ENCODE measurements at regions of chr12 and their contacts with region 1.

Region 1: DNA sequence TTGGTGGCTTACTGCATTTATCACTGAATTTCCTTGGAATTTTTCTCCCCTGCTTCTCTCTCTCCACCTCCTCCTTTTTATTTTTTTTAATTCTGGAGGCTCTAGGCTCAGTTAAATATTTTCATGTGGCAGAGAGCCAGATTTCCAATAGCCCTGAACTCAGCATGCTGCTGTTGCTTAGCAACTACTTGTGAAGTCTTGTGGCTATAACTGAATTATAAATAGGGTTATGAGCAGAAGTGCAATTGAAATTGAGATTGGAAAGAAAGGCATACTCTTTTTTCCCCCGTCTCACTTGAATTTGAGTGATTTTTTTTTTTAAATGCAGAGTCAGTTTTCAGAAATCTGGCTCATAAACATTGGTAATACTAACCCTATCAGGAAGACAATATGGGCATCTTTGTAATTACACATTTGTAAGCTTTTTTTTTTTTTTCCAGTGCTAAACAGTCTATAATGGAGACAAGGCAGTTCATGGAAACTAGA is 38.3 kb downstream of the ATF7IP start:
- DNase-seq: no peak
- H3K4me3 Mint-ChIP-seq: peak overlapping the region; percentile 28
- H3K27ac Mint-ChIP-seq: peak overlapping the region; percentile 63
- H3K4me1 Mint-ChIP-seq: peaks cover 82% of the 10 kb centered on the region
- H3K27me3 Mint-ChIP-seq: no peaks in the 10 kb centered on the region

Region 2: GRCh38 chr12:14417715-14418114 is 14.0 kb after region 1 on chr12:
- CTCF ChIA-PET with region 1: interaction called, 8 read pairs
- intact Hi-C with region 1: loop called (anchors 1 kb)
- DNase-seq: peak; percentile 89
- H3K4me3 Mint-ChIP-seq: peak overlapping the region; percentile 70
- H3K27ac Mint-ChIP-seq: peak overlapping the region; percentile 90
- H3K4me1 Mint-ChIP-seq: peaks cover 59% of the 10 kb centered on the region
- H3K27me3 Mint-ChIP-seq: no peaks in the 10 kb centered on the region

Region 3: GRCh38 chr12:14454098-14454907 is 50.5 kb after region 1 on chr12:
- CTCF ChIA-PET with region 1: interaction called, 4 read pairs
- intact Hi-C with region 1: loop called (anchors 5 kb)
- DNase-seq: peak; percentile 31
- H3K4me3 Mint-ChIP-seq: no peak overlapping the region
- H3K27ac Mint-ChIP-seq: peak overlapping the region; percentile 82
- H3K4me1 Mint-ChIP-seq: peaks cover 54% of the 10 kb centered on the region
- H3K27me3 Mint-ChIP-seq: no peaks in the 10 kb centered on the region

Region 4: GRCh38 chr12:14482886-14483285 is 79.1 kb after region 1 on chr12:
- CTCF ChIA-PET with region 1: no interaction called
- intact Hi-C with region 1: no loop called
- DNase-seq: no peak
- H3K4me3 Mint-ChIP-seq: no peak overlapping the region
- H3K27ac Mint-ChIP-seq: peak overlapping the region; percentile 51
- H3K4me1 Mint-ChIP-seq: peaks cover 9% of the 10 kb centered on the region
- H3K27me3 Mint-ChIP-seq: no peaks in the 10 kb centered on the region

Region 5: DNA sequence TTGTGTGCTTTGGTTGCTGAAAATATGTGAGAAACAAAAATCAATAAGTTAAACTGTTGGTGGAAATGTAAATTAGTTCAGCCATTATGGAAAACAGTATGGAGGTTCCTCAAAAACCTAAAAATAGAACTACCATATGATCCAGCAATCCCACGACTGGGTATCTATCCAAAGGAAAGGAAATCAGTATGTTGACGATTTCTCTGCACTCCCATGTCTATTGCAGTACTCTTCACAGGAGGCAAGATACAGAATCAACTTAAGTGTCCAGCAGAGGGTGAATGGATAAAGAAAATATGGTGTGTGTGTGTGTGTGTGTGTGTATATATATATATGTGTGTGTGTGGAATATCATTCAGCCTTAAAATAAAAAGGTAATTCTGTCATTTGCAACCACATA is 1078.1 kb after region 1 on chr12:
- CTCF ChIA-PET with region 1: no interaction called
- intact Hi-C with region 1: no loop called
- DNase-seq: no peak
- H3K4me3 Mint-ChIP-seq: no peak overlapping the region
- H3K27ac Mint-ChIP-seq: no peak overlapping the region
- H3K4me1 Mint-ChIP-seq: no peaks in the 10 kb centered on the region
- H3K27me3 Mint-ChIP-seq: peaks cover 12% of the 10 kb centered on the region

Measured in activated naive CD4-positive, alpha-beta T cell treated with anti-CD3 and anti-CD28 coated beads for 36 hours (primary cell).